Activated CD4-positive, alpha-beta memory T cell treated with anti-CD3 and anti-CD28 coated beads, Interleukin-2, amount 10 ng/mL, durations not matched to agents 7 days and 5 days (primary cell): ENCODE measurements at regions of chr17 and their contacts with region 1.

Region 1: GRCh38 chr17:79796763-79797491 is at the start of gene CBX8:
- DNase-seq: peak; percentile 100
- H3K4me3 Mint-ChIP-seq: peak within 1 kb of the TSS; percentile 83
- H3K27ac Mint-ChIP-seq: peak within 1 kb of the TSS; percentile 70
- H3K4me1 Mint-ChIP-seq: peaks cover 33% of the 10 kb centered on the region
- H3K27me3 Mint-ChIP-seq: peaks cover 44% of the 10 kb centered on the region
- total RNA-seq, gene CBX8: 5.7 to 6.7 TPM

Region 2: GRCh38 chr17:79500745-79501618 is 295.9 kb before region 1 on chr17:
- CTCF ChIA-PET with region 1: no interaction called
- POLR2A ChIA-PET with region 1: no interaction called
- DNase-seq: no peak
- H3K4me3 Mint-ChIP-seq: no peak overlapping the region
- H3K27ac Mint-ChIP-seq: no peak overlapping the region
- H3K4me1 Mint-ChIP-seq: no peaks in the 10 kb centered on the region
- H3K27me3 Mint-ChIP-seq: peaks cover 4% of the 10 kb centered on the region

Region 3: DNA sequence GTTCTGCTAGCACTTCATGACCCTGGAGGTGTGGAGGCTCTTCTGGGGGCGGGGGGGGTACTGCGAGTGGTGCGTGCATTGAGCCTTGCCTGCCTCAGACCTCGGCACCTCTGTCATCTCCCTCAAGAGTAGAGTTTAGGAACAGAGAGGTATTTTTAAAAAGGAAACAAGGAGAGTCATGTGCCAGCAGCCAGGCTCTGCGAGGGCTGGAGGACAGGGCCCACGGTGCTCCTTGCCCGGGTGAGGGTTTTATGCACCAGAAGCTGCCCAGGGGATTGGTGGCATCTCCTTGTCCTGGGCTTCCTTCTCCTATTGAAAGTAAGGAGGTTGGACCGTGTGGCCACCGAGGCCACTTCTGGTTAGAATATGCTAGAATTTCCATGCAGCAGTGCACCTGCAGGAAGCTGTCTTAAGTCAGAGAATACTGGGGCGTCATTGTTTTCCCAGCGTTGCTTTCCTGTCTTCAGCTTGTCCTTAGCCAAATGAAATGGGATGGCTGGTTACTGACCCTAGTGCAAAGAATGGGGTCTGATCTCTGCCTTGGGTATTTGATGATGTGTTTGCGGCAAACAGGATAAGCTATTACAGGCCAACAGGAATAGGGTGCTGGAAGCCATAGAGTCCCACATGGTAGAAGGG is 15.8 kb before region 1 on chr17:
- CTCF ChIA-PET with region 1: no interaction called
- POLR2A ChIA-PET with region 1: no interaction called
- DNase-seq: no peak
- H3K4me3 Mint-ChIP-seq: no peak overlapping the region
- H3K27ac Mint-ChIP-seq: no peak overlapping the region
- H3K4me1 Mint-ChIP-seq: peaks cover 18% of the 10 kb centered on the region
- H3K27me3 Mint-ChIP-seq: peaks cover 36% of the 10 kb centered on the region

Region 4: GRCh38 chr17:79810130-79811010 is 13.4 kb after region 1 on chr17:
- CTCF ChIA-PET with region 1: interaction called, 11 read pairs
- POLR2A ChIA-PET with region 1: interaction called, 24 read pairs
- DNase-seq: peak; percentile 82
- H3K4me3 Mint-ChIP-seq: peak overlapping the region; percentile 21
- H3K27ac Mint-ChIP-seq: no peak overlapping the region
- H3K4me1 Mint-ChIP-seq: peaks cover 32% of the 10 kb centered on the region
- H3K27me3 Mint-ChIP-seq: peaks cover 64% of the 10 kb centered on the region